ENCODE measurements at regions of chr12 and their contacts with region 1.

Region 1: GRCh38 chr12:57005980-57006808 is at the start of gene ZBTB39:
- DNase-seq: peak; percentile 60 to 82
- ATAC-seq: peak; percentile 67 to 76
- H3K4me3 ChIP-seq: peak within 1 kb of the TSS; percentile 99
- H3K27ac ChIP-seq: peak within 1 kb of the TSS; percentile 98 to 99
- H3K4me1 ChIP-seq: peaks cover 39% of the 10 kb centered on the region
- CTCF ChIP-seq: peak; percentile 97
- EP300 ChIP-seq: no peak
- POLR2A ChIP-seq: peak; percentile 83
- RAD21 ChIP-seq: no peak; a peak in 1 of 5 replicates
- polyA plus RNA-seq, gene ZBTB39: 9.5 and 9.8 TPM in 2 replicates

Region 2: DNA sequence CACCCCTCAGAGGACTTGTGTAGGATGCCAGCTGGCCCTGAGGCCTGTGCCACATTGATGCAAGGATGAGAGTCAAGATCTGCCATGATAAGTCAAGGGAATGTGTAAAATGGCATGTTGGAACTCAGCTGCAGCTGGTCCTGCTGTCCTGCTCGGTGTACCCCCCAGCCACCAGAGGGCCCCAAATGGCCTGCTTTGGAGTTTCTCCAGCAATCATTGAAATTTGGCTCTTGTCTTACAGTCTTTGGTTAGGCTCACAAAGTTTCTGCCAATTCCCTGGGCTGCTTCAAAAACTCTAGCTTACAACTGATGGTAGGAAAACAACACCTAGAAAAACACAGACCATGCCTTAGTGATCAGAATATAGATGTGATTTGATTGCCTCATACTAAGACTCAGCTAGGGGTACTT is 166.3 kb before region 1 on chr12:
- CTCF ChIA-PET with region 1: interaction called, 17 read pairs
- POLR2A ChIA-PET with region 1: no interaction called
- DNase-seq: peak; percentile 33 to 65
- ATAC-seq: peak; percentile 80 to 91; a peak in 5 of 6 replicates
- H3K4me3 ChIP-seq: no peak overlapping the region
- H3K27ac ChIP-seq: no peak overlapping the region; a peak in 1 of 6 replicates
- H3K4me1 ChIP-seq: peaks cover 21% of the 10 kb centered on the region; the same call in 2 of the 3 replicates
- CTCF ChIP-seq: peak; percentile 83
- EP300 ChIP-seq: no peak
- POLR2A ChIP-seq: no peak
- RAD21 ChIP-seq: peak; percentile 94 to 98

Region 3: GRCh38 chr12:57031138-57031725 is 25.0 kb after region 1 on chr12:
- CTCF ChIA-PET with region 1: interaction called, 34 read pairs
- POLR2A ChIA-PET with region 1: no interaction called
- DNase-seq: peak in 1 of 2 experiments; percentile 35
- ATAC-seq: peak in 1 of 2 experiments; percentile 47; a peak in 3 of 6 replicates
- H3K4me3 ChIP-seq: no peak overlapping the region
- H3K27ac ChIP-seq: peak overlapping the region in 1 of 2 experiments; percentile 37; a peak in 2 of 6 replicates
- H3K4me1 ChIP-seq: peaks cover 6% of the 10 kb centered on the region; the same call in 2 of the 3 replicates
- CTCF ChIP-seq: no peak
- EP300 ChIP-seq: no peak
- POLR2A ChIP-seq: no peak
- RAD21 ChIP-seq: no peak

Region 4: GRCh38 chr12:57069523-57069922 is 63.3 kb after region 1 on chr12:
- CTCF ChIA-PET with region 1: interaction called, 32 read pairs
- POLR2A ChIA-PET with region 1: no interaction called
- DNase-seq: peak; percentile 48 to 86
- ATAC-seq: peak; percentile 99
- H3K4me3 ChIP-seq: no peak overlapping the region
- H3K27ac ChIP-seq: peak overlapping the region in 1 of 2 experiments; percentile 68; a peak in 3 of 6 replicates
- H3K4me1 ChIP-seq: 0 out of 3 replicates have a peak, but pooled peaks cover 4% of the 10 kb centered on the region
- CTCF ChIP-seq: peak; percentile 94
- EP300 ChIP-seq: no peak
- POLR2A ChIP-seq: no peak
- RAD21 ChIP-seq: peak; percentile 94 to 97

Measured in A549 (cell line).